Activated CD4-positive, alpha-beta memory T cell treated with anti-CD3 and anti-CD28 coated beads, Interleukin-2, amount 10 ng/mL, durations not matched to agents 7 days and 5 days (primary cell): ENCODE measurements at regions of chr12 and their contacts with region 1.

Region 1: DNA sequence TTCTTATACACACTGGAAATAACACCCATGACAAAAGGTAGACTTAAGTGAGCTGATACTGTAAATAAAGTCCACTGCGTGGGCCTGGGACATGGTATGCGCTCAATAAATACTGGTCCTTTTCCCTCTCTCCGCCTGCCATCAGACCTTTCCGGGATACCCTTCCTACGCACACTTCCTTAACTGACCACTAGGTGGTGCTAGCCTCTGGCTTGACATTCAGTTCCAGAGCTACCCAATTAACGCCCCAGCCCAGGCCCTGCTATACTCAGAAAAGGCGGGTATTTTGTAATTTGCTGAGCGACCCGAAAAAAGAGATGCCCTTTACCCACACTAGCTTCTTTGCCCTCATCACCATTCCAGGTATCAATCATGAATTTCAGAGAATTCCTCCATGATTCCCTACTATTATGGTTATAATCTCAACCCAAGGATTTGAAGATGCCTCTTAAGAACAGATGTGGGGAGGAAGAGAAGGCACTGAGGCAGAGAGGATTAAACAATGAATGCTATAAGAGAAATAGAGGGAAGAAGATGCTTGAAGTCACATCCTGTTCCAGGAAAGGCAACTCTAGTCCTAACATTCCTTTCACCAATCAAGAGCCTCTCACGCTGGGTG is 3.9 kb upstream of the LRP1 start:
- DNase-seq: peak; percentile 76
- H3K4me3 Mint-ChIP-seq: no peak overlapping the region
- H3K27ac Mint-ChIP-seq: no peak overlapping the region
- H3K4me1 Mint-ChIP-seq: peaks cover 5% of the 10 kb centered on the region
- H3K27me3 Mint-ChIP-seq: peaks cover 37% of the 10 kb centered on the region

Region 2: DNA sequence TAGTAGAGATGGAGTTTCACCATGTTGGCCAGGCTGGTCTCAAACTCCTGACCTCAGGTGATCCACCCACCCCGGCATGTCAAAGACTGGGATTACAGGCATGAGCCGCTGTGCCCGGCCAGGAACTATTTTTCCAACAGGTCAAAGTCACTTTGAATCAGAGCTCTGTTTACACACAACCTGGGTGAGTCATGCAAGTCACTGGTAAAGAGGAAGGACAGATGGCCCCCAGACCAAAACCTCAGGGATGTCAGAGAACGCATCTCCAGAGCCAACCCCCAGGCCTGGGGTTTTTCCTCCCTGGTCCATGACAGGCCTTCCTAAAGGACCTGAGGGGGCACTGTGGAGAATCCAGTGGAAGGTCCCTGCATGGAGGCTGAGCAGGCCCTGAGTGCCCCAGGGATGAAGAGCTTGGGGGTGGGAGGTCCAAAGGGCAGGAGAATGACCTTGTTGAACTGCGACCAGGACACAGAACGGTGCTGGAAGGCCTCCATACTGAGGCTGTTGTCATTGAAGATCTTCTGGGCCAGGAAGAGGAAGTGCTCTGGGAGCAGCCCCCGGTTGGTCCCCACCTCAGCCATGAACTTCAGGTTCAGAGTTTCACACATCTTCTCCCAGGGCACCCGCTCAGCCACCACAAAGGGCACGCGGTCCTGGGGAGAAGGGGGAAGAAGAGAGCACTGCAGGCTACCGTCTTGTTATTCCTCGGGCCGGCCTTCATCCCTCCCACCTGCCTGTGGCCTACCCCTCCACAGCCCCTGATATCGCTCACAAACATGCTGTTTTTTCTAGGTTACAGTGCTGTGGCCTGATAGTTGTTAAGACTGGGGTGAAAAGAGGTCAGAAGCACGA is 22.3 kb before region 1 on chr12:
- CTCF ChIA-PET with region 1: no interaction called
- POLR2A ChIA-PET with region 1: no interaction called
- DNase-seq: no peak
- H3K4me3 Mint-ChIP-seq: no peak overlapping the region
- H3K27ac Mint-ChIP-seq: peak overlapping the region; percentile 26
- H3K4me1 Mint-ChIP-seq: peaks cover 20% of the 10 kb centered on the region
- H3K27me3 Mint-ChIP-seq: no peaks in the 10 kb centered on the region

Region 3: GRCh38 chr12:57175428-57176138 is 51.2 kb after region 1 on chr12:
- CTCF ChIA-PET with region 1: interaction called, 65 read pairs
- POLR2A ChIA-PET with region 1: no interaction called
- DNase-seq: peak; percentile 48
- H3K4me3 Mint-ChIP-seq: no peak overlapping the region
- H3K27ac Mint-ChIP-seq: no peak overlapping the region
- H3K4me1 Mint-ChIP-seq: no peaks in the 10 kb centered on the region
- H3K27me3 Mint-ChIP-seq: no peaks in the 10 kb centered on the region

Region 4: DNA sequence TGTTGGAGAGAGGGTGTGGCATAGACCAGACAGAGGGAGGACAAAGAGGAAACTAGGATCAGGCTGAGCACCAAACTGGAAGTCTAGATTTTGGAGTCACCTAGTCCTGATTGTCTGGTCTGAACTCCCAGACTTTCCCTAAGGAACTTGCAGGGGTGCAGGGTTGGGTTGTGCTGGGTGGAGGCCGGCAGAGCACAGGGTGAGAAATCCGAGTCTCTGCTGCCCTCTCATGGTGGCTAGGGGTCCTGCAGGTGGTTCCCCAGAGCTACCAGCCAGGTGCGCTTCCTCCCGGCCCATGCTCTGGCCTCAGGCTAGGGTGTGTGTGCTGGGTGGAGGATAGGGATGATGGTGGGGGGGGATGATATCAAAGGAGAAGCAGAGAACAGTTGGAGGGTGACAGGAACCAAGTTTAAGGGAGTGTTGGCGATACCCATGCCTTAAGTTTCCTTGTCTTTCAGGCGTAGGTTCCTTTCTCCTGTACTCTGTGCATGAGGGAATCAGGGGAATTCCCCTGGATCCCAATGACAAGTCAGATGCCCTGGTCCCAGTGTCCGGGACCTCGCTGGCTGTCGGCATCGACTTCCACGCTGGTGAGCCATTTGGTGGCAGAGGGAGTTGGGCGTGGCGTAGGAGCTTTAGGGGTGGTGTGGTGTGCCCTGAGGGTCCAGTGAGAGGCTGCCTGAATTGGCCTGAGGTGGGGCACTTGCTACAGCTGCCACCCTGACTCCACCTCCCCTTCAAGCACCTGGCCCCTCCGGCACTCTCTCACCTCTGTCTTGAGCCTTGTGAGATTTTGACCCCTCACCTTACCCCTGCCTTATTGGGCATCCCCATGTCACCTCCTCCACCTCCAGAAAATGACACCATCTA is 58.8 kb after region 1 on chr12:
- CTCF ChIA-PET with region 1: interaction called, 65 read pairs
- POLR2A ChIA-PET with region 1: interaction called, 5 read pairs
- DNase-seq: peak; percentile 80
- H3K4me3 Mint-ChIP-seq: no peak overlapping the region
- H3K27ac Mint-ChIP-seq: no peak overlapping the region
- H3K4me1 Mint-ChIP-seq: peaks cover 3% of the 10 kb centered on the region
- H3K27me3 Mint-ChIP-seq: no peaks in the 10 kb centered on the region